ENCODE measurements at regions of chr11 and their contacts with region 1.

Region 1: GRCh38 chr11:47204637-47204989 is 10.2 kb upstream of the DDB2 start:
- DNase-seq: no peak
- ATAC-seq: no peak

Region 2: GRCh38 chr11:47847892-47848635 is 643.5 kb after region 1 on chr11 and contains the start of gene NUP160:
- intact Hi-C with region 1: loop called (anchors 5 kb)
- DNase-seq: peak; percentile 91
- ATAC-seq: peak; percentile 96
- total RNA-seq, gene NUP160: 48.0 TPM